Esophagus muscularis mucosa (tissue), 4 donors: ENCODE measurements at regions of chrX and their contacts with region 1.

Region 1: DNA sequence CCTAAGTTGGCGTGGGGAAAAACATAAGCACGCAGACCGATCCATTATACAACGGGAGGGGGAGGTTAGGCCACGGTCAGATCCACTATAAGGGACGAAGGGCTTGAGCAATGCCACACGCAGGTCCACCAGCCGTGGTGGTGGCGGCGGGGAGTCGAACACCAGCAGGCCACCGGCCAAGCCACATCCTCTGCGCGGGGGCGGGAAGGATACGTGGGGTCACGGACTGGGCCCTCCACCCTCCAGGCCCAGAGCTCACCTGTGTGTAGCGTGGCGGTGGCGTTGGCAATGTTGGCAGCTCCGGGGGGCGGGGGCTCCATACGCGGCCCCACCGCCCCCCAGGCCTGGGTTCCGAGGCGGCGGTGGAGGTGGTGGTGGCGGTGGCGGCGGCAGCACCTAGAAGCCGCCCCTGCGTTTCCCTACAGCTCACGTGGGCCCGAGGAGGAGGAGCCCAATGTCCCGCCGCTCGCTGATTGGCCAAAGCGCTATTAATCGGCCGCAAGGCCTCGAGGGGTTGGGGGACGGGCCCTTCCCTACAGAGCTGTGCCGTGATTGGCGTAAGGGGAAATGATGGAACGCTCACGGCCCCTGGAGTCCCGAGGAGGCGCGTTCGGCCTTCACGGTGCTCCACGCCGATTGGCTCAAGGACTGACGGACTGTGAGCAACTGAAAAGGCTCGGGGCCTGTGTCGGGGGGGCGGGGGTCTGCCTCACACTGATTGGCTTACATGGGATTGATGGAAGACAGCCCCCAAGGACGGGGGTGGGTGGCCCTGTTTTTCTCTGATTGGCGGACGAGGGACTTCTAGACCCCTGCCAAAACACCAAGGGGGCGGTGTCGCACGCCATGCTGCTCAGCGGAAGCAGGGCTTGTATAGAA is at the start of gene ELK1:
- DNase-seq: peak; percentile 98
- H3K4me3 ChIP-seq: peak within 1 kb of the TSS; percentile 72 to 85 (median 74)
- H3K27ac ChIP-seq: peak within 1 kb of the TSS; percentile 87 to 89 (median 89)
- H3K4me1 ChIP-seq: peaks cover 9 to 28% (median 24%) of the 10 kb centered on the region in 4 donors
- H3K27me3 ChIP-seq: peaks cover 0 to 6% (median 0%) of the 10 kb centered on the region in 4 donors
- CTCF ChIP-seq: no peak
- EP300 ChIP-seq: no peak
- POLR2A ChIP-seq: peak; percentile 71
- total RNA-seq, gene ELK1: 19.1 to 35.3 (median 25.1) TPM

Region 2: GRCh38 chrX:48107717-48108116 is 457.3 kb after region 1 on chrX:
- intact Hi-C with region 1: no loop called
- DNase-seq: no peak
- H3K4me3 ChIP-seq: no peak overlapping the region
- H3K27ac ChIP-seq: no peak overlapping the region
- H3K4me1 ChIP-seq: no peaks in the 10 kb centered on the region
- H3K27me3 ChIP-seq: no peaks in the 10 kb centered on the region
- CTCF ChIP-seq: no peak
- EP300 ChIP-seq: no peak
- POLR2A ChIP-seq: no peak

Region 3: GRCh38 chrX:48957827-48958634 is 1307.6 kb after region 1 on chrX:
- intact Hi-C with region 1: loop called (anchors 10 kb)
- DNase-seq: peak; percentile 98
- H3K4me3 ChIP-seq: peak overlapping the region; percentile 63 to 79 (median 72)
- H3K27ac ChIP-seq: peak overlapping the region; percentile 86 to 92 (median 90)
- H3K4me1 ChIP-seq: peaks cover 14 to 49% (median 42%) of the 10 kb centered on the region in 4 donors
- H3K27me3 ChIP-seq: no peaks in the 10 kb centered on the region
- CTCF ChIP-seq: no peak
- EP300 ChIP-seq: no peak
- POLR2A ChIP-seq: peak; percentile 65

Region 4: GRCh38 chrX:49163555-49164419 is 1513.4 kb after region 1 on chrX:
- intact Hi-C with region 1: loop called (anchors 10 kb)
- DNase-seq: peak; percentile 95
- H3K4me3 ChIP-seq: peak overlapping the region; percentile 46 to 57 (median 50)
- H3K27ac ChIP-seq: peak overlapping the region; percentile 86 to 91 (median 90)
- H3K4me1 ChIP-seq: peaks cover 3 to 45% (median 29%) of the 10 kb centered on the region in 4 donors
- H3K27me3 ChIP-seq: no peaks in the 10 kb centered on the region
- CTCF ChIP-seq: peak; percentile 77 to 85 (median 79)
- EP300 ChIP-seq: no peak
- POLR2A ChIP-seq: no peak